ENCODE measurements at regions of chr15 and their contacts with region 1.

Region 1: GRCh38 chr15:88484682-88485331 is 17.3 kb downstream of the MRPS11 start:
- DNase-seq: no peak
- H3K4me3 ChIP-seq: no peak overlapping the region
- H3K27ac ChIP-seq: no peak overlapping the region
- H3K4me1 ChIP-seq: no peaks in the 10 kb centered on the region
- H3K27me3 ChIP-seq: no peaks in the 10 kb centered on the region
- CTCF ChIP-seq: no peak
- EP300 ChIP-seq: no peak
- POLR2A ChIP-seq: no peak

Region 2: DNA sequence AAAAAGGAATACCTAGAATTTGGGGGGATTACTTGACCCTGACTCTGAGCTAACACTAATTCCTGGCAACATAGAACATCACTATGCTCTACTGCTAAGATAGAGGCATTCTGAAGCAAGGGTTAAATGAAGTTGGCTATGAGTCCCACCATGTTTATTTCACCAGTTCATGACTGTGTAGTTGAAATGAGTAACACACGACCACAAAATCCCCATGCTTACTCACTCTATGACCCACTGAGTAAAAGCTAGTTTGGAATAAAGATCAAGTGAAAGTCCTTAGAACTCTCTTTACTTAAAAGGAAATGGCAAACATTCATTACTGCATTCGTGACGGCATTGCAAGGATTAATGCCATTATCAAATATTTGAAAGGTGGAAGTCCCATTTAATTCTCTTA is 65.0 kb before region 1 on chr15:
- intact Hi-C with region 1: no loop called
- DNase-seq: no peak
- H3K4me3 ChIP-seq: no peak overlapping the region
- H3K27ac ChIP-seq: no peak overlapping the region
- H3K4me1 ChIP-seq: no peaks in the 10 kb centered on the region
- H3K27me3 ChIP-seq: no peaks in the 10 kb centered on the region
- CTCF ChIP-seq: no peak
- EP300 ChIP-seq: no peak
- POLR2A ChIP-seq: no peak

Region 3: GRCh38 chr15:88610701-88611231 is 126.0 kb after region 1 on chr15:
- intact Hi-C with region 1: loop called in 1 of 4 experiments (anchors 10 kb)
- DNase-seq: no peak
- H3K4me3 ChIP-seq: no peak overlapping the region
- H3K27ac ChIP-seq: no peak overlapping the region
- H3K4me1 ChIP-seq: no peaks in the 10 kb centered on the region
- H3K27me3 ChIP-seq: no peaks in the 10 kb centered on the region
- CTCF ChIP-seq: no peak
- EP300 ChIP-seq: no peak
- POLR2A ChIP-seq: no peak